ENCODE measurements at regions of chr16 and their contacts with region 1.

Region 1: DNA sequence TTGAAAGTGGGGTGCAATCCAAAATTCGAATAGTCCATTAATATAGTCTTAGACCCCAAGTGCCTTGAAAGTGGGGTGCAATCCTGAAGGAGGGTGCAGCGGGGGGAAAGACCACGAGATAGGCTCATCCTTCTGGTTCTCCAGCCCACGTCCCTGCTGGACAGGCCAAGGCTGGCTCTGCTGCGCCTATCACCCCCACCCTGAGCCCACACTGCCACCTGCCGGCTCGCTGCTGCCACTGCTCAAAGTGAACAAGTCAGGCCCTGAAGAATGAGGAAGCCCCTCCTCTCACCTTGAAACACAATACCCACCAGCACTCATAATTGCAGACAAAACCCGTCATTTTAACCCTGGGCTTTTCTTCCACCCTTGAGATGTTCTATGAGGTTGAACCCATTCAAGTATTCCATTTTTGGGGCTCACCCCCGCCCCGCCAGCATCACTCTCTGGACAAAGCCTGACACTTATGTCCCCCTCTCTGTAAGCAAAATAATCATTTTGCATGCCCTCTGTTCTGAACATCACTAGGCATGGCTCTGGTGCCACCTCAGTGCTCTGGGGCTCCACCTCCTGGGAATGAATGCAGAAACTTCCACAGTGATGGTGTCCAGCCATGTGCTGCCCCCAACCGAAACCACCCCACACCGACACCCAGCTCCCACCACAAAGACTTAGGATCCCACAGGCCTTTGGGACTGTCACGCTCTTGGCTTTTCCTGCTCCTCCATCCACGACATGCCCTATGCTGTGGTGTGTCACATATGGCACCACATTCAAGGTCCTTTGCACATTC is 56.8 kb downstream of the BEAN1 start:
- DNase-seq: peak; percentile 79
- ATAC-seq: peak; percentile 63 to 66

Region 2: GRCh38 chr16:65833171-65833871 is 650.6 kb before region 1 on chr16:
- intact Hi-C with region 1: no loop called
- DNase-seq: no peak
- ATAC-seq: no peak

Region 3: DNA sequence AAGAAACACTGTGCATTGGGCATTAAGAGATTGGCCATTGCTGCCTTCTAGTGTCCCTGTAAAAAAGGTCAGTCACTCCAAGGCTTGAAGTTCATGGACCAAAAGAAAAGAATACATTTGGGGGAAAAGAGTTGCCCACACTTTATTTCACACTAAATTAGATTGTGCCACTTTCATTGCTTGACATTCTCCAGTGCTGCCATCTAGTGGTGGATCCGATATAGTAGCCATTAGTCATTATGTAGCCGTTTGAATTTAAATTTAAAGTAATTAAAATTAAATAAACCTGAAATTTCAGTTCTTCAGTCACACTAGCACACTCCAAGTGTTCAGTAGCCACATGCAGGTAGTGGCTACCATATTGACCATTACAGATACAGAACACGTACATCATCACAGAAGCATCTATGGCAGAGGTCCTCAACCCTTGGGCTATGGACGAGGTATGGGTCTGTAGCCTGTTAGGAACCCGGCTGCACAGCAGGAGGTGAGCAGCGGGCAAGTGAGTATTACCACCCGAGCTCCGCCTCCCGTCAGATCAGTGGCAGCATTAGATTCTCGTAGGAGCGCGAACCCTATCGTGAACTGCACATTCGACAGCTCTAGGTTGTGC is 139.2 kb before region 1 on chr16:
- intact Hi-C with region 1: loop called in 1 of 2 experiments (anchors 5 kb)
- DNase-seq: no peak
- ATAC-seq: no peak

Region 4: GRCh38 chr16:66353997-66354909 is 129.6 kb before region 1 on chr16:
- intact Hi-C with region 1: loop called in 1 of 2 experiments (anchors 5 kb)
- DNase-seq: no peak
- ATAC-seq: no peak

Region 5: GRCh38 chr16:66406534-66407221 is 77.2 kb before region 1 on chr16:
- intact Hi-C with region 1: loop called (anchors 1 to 5 kb)
- DNase-seq: peak; percentile 91
- ATAC-seq: peak; percentile 86 to 89

Measured in left cardiac atrium (tissue), 4 donors.